Calu3 (cell line): ENCODE measurements at regions of chr17 and their contacts with region 1.

Region 1: GRCh38 chr17:60256174-60256573 is 106.4 kb downstream of the CA4 start:
- DNase-seq: no peak
- H3K4me3 Mint-ChIP-seq: no peak overlapping the region
- H3K27ac Mint-ChIP-seq: no peak overlapping the region
- H3K4me1 Mint-ChIP-seq: no peaks in the 10 kb centered on the region
- H3K27me3 Mint-ChIP-seq: no peaks in the 10 kb centered on the region
- CTCF ChIP-seq: no peak

Region 2: DNA sequence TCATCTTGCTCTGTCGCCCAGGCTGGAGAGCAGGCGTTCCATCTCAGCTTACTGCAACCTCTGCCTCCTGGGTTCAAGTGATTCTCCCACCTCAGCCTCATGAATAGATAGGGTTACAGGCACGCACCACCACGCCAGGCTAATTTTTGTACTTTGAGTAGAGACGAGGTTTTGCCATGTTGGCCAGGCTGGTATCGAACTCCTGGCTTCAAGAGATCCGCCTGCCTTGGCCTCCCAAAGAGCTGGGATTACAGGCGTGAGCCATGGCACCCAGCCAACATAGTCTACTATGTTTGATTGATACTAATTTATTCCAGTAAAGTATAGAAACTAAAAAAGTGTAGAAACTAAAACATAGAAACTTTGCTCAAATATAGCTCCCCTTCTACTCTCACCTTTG is 11.5 kb before region 1 on chr17:
- CTCF ChIA-PET with region 1: no interaction called
- intact Hi-C with region 1: no loop called
- DNase-seq: no peak
- H3K4me3 Mint-ChIP-seq: no peak overlapping the region
- H3K27ac Mint-ChIP-seq: no peak overlapping the region
- H3K4me1 Mint-ChIP-seq: no peaks in the 10 kb centered on the region
- H3K27me3 Mint-ChIP-seq: no peaks in the 10 kb centered on the region
- CTCF ChIP-seq: no peak

Region 3: GRCh38 chr17:60372790-60373483 is 116.8 kb after region 1 on chr17:
- CTCF ChIA-PET with region 1: no interaction called
- intact Hi-C with region 1: loop called (anchors 10 kb)
- DNase-seq: no peak
- H3K4me3 Mint-ChIP-seq: no peak overlapping the region
- H3K27ac Mint-ChIP-seq: no peak overlapping the region
- H3K4me1 Mint-ChIP-seq: peaks cover 18% of the 10 kb centered on the region
- H3K27me3 Mint-ChIP-seq: no peaks in the 10 kb centered on the region
- CTCF ChIP-seq: no peak

Region 4: DNA sequence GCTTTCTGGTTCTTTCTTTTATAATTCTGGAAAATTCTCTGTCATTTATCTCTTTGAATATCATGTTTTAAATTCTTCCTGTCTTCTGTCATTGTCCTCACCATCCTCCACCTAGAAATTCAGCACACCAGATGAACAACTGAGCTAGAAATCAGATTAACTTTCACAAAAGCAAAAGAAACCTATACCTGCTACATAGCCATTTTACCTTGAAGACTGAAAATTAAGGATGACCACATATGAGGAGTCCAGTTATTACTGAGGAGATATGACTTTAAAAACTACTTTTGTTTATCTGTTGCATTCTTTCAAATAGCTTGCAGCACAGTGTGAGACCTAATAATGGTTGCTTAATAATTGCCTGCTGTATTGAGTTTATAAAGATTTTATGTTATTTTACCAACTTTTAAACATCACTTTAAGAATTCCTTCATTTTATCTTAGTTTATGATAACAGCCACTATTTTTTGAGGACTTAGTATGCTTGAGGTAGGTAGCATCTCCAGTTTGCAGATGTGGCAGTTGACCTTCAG is 525.8 kb after region 1 on chr17:
- CTCF ChIA-PET with region 1: no interaction called
- intact Hi-C with region 1: no loop called
- DNase-seq: no peak
- H3K4me3 Mint-ChIP-seq: no peak overlapping the region
- H3K27ac Mint-ChIP-seq: no peak overlapping the region
- H3K4me1 Mint-ChIP-seq: no peaks in the 10 kb centered on the region
- H3K27me3 Mint-ChIP-seq: no peaks in the 10 kb centered on the region
- CTCF ChIP-seq: no peak